Dendritic cell treated with granulocyte-macrophage colony-stimulating factor and Interleukin-4, amounts not matched to agents 40 ng/mL and 50 ng/mL, for 4 days (primary cell): ENCODE measurements at regions of chr22 and their contacts with region 1.

Region 1: DNA sequence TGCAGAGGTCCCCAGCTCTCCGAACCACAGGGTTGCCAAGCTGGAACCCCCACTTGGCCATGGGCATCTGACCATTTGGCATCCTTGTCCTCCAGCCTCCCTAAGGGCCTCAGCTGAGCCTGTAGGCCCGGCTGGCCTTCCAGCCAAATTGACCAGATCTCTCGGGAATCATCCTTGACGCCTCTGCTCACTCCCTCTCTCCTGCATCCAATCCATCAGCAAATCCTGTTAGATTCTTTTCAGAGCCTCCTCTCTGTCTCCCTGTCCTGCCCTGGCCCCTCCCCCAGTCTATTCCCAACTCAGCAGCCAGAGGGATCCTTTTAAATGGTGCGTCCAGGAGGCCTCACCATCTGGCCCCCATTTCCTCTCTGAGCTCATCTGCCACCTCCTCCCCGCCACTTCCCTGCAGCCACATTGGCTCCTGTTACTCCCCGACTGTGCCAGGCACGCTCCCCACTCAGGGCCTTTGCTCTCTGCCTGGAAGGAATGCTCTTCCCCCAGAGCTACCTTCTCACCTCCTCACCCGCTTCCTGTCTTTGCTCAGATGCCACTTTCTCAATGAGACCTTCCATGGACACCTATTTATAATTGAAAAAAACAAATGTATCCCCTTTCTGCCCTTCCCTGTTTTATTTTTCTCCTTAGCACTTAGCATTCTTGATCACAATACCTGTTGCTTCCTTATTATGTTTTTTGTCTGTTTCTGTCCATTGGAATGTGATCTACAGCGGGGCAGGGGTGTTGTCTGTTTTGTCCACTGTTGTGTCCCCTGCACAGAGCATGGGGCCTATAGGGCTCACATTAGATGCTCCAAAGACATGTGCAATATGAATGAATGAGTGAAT is 78.1 kb downstream of the NFAM1 start:
- H3K4me3 Mint-ChIP-seq: no peak overlapping the region
- H3K27ac Mint-ChIP-seq: no peak overlapping the region
- H3K4me1 Mint-ChIP-seq: peaks cover 5% of the 10 kb centered on the region
- H3K27me3 Mint-ChIP-seq: peaks cover 41% of the 10 kb centered on the region

Region 2: GRCh38 chr22:42101199-42101598 is 252.9 kb before region 1 on chr22:
- intact Hi-C with region 1: no loop called
- H3K4me3 Mint-ChIP-seq: no peak overlapping the region
- H3K27ac Mint-ChIP-seq: no peak overlapping the region
- H3K4me1 Mint-ChIP-seq: no peaks in the 10 kb centered on the region
- H3K27me3 Mint-ChIP-seq: no peaks in the 10 kb centered on the region

Region 3: DNA sequence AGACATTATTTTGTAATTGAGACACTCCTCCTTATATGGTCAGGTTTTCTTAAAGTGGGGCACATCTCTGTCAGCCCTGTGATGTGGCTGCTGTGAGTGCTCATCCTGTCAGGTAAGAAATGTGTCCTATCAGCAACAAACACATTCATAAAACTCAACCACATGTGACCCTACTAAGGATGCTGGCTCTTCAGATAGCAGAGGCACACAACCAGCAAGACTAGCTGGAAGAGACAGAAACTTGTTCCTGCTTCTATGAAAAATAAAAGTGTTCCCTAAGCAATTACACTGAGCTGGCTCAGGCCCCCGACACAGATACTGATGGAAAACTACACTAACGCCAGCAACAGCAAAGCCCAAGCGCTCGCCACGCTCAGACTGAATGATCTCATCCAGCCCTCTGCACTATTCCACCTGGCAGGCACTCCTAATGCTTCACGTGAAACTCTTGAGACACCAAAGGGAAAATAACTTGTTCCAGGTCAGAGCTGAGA is 173.7 kb before region 1 on chr22:
- intact Hi-C with region 1: no loop called
- H3K4me3 Mint-ChIP-seq: no peak overlapping the region
- H3K27ac Mint-ChIP-seq: no peak overlapping the region
- H3K4me1 Mint-ChIP-seq: peaks cover 5% of the 10 kb centered on the region
- H3K27me3 Mint-ChIP-seq: no peaks in the 10 kb centered on the region

Region 4: GRCh38 chr22:42289671-42290541 is 64.2 kb before region 1 on chr22:
- intact Hi-C with region 1: loop called (anchors 2 kb)
- H3K4me3 Mint-ChIP-seq: no peak overlapping the region
- H3K27ac Mint-ChIP-seq: no peak overlapping the region
- H3K4me1 Mint-ChIP-seq: no peaks in the 10 kb centered on the region
- H3K27me3 Mint-ChIP-seq: peaks cover 33% of the 10 kb centered on the region

Region 5: DNA sequence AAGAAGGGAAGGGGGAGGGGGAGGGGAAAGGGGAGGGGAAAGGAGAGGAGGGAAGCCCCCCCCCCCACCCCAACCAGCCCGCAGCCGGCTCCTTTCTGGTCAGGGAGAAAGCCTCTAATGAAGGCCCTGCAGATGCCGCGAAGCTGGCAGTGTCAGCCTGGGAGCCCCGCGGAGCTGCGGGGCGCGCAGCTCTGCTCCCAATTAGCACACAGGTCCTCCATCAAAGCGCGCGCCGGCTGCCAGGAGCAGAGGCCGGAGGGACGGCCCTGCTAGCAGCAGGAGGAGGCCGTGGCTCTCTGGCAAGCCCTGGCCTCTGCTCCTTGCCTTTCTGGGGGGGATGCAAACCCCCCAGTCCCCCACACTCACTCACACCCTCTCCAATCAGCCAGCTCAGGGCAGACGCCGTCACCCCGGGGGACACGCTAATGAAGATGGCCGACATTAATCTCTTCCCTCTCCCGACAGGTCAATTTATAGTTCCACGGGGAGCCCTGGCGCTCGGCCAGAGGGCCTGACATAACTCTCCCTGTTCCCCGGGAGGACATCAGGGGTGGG is 13.2 kb before region 1 on chr22:
- intact Hi-C with region 1: no loop called
- H3K4me3 Mint-ChIP-seq: no peak overlapping the region
- H3K27ac Mint-ChIP-seq: no peak overlapping the region
- H3K4me1 Mint-ChIP-seq: no peaks in the 10 kb centered on the region
- H3K27me3 Mint-ChIP-seq: peaks cover 79% of the 10 kb centered on the region

Region 6: DNA sequence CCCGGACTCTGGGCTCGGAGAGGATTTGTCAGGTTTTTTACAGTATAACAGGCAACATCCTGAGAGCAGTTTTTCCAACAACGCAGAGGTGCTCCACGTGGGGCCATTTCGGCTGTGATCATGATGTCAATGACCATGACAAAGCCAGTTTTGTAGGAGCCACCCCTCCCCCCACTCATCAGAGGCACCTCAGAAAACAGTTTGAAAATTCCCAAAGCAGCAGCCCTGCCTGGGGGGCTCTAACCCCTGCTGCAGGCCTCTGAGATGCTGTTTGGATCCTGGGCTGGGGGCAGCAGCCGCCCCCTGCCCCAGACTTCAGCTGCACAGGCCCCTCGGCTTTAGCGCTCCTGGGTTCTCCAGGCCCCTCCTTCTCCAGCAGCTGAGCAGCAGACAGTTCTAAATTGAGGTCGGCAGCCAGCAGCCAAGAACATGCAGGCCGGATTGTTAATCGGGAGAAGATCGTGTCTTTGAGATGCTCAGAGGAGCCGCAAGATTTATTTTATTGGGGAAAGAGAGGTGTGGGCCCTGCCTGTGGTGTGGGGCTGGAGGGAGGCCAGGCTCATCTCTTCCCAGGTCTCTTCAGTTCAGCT is 58.7 kb after region 1 on chr22:
- intact Hi-C with region 1: no loop called
- H3K4me3 Mint-ChIP-seq: no peak overlapping the region
- H3K27ac Mint-ChIP-seq: no peak overlapping the region
- H3K4me1 Mint-ChIP-seq: peaks cover 44% of the 10 kb centered on the region
- H3K27me3 Mint-ChIP-seq: peaks cover 4% of the 10 kb centered on the region